HCT116 (cell line): ENCODE measurements at regions of chr19 and their contacts with region 1.

Region 1: GRCh38 chr19:56170261-56170660 is 5.5 kb upstream of the GALP start:
- DNase-seq: no peak
- ATAC-seq: no peak
- H3K4me3 ChIP-seq: no peak overlapping the region
- H3K27ac ChIP-seq: no peak overlapping the region
- H3K4me1 ChIP-seq: no peaks in the 10 kb centered on the region
- H3K27me3 ChIP-seq: no peaks in the 10 kb centered on the region
- CTCF ChIP-seq: no peak
- POLR2A ChIP-seq: no peak
- RAD21 ChIP-seq: no peak

Region 2: DNA sequence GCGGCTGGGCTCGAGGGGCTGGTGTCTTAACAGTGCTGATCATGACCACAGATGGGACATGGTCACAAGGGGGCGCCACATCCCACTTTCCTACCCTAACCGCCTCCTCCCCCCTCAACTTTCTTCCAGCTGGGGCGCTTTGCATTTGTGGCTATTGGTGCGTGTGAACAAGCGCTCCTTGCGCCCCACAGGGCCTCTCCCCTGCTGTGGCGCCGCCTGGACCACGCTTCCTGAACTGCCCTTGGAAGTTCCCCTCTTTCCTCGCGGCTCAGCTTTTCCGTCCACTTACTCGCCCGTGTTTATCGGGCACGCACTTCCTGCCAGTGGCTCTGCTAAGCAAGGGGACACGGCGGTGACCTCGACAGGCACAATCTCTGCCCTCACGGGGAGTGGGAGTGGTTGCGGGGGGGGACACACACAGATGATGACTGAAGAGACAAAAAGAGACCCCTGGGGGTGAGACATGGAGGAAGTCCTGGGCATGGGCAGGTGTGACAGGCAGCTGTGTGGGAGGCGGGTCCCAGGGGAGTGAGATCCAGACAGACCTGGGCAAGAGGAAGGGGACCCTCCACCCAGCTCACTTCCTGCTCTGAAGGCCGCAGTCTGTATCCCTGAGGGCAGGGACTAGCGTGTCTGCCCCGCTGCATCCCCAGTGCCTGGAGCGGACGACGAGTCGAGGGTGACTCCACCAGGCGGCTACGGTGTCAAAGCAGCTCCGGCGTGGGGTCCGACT is 89.4 kb before region 1 on chr19:
- CTCF ChIA-PET with region 1: interaction called, 8 read pairs
- POLR2A ChIA-PET with region 1: no interaction called
- RAD21 ChIA-PET with region 1: interaction called in 1 of 2 experiments, 4 read pairs
- intact Hi-C with region 1: loop called (anchors 1 kb)
- DNase-seq: peak; percentile 39
- ATAC-seq: peak; percentile 82
- H3K4me3 ChIP-seq: no peak overlapping the region
- H3K27ac ChIP-seq: no peak overlapping the region
- H3K4me1 ChIP-seq: peaks cover 6 to 7% of the 10 kb centered on the region in 2 experiments; a peak in 3 of 4 replicates
- H3K27me3 ChIP-seq: no peaks in the 10 kb centered on the region
- CTCF ChIP-seq: peak; percentile 44 to 53 (median 53); a peak in 5 of 6 replicates
- POLR2A ChIP-seq: no peak
- RAD21 ChIP-seq: peak; percentile 61